ENCODE measurements at regions of chr11 and their contacts with region 1.

Region 1: GRCh38 chr11:66842896-66843775 is at the start of gene RCE1:
- DNase-seq: peak; percentile 82 to 95 (median 86)
- H3K4me3 ChIP-seq: peak within 1 kb of the TSS; percentile 72 to 100 (median 99)
- H3K27ac ChIP-seq: peak within 1 kb of the TSS; percentile 72 to 99 (median 94)
- H3K27me3 ChIP-seq: no peaks in the 10 kb centered on the region
- CTCF ChIP-seq: peak in 21 of 56 donors; percentile 7 to 54 (median 25)
- total RNA-seq, gene RCE1: 9.8 to 28.2 (median 16.6) TPM

Region 2: GRCh38 chr11:66344550-66345315 is 498.4 kb before region 1 on chr11 and contains the start of gene BRMS1:
- intact Hi-C with region 1: loop called in 1 of 2 experiments (anchors 10 kb)
- DNase-seq: peak; percentile 97 to 100 (median 99)
- H3K4me3 ChIP-seq: peak within 1 kb of the TSS; percentile 59 to 100 (median 94)
- H3K27ac ChIP-seq: peak within 1 kb of the TSS in 58 of 59 donors; percentile 8 to 98 (median 80)
- H3K27me3 ChIP-seq: no peaks in the 10 kb centered on the region
- CTCF ChIP-seq: peak in 53 of 56 donors; percentile 13 to 70 (median 49)
- total RNA-seq, gene BRMS1: 10.3 to 25.1 (median 16.2) TPM

Region 3: DNA sequence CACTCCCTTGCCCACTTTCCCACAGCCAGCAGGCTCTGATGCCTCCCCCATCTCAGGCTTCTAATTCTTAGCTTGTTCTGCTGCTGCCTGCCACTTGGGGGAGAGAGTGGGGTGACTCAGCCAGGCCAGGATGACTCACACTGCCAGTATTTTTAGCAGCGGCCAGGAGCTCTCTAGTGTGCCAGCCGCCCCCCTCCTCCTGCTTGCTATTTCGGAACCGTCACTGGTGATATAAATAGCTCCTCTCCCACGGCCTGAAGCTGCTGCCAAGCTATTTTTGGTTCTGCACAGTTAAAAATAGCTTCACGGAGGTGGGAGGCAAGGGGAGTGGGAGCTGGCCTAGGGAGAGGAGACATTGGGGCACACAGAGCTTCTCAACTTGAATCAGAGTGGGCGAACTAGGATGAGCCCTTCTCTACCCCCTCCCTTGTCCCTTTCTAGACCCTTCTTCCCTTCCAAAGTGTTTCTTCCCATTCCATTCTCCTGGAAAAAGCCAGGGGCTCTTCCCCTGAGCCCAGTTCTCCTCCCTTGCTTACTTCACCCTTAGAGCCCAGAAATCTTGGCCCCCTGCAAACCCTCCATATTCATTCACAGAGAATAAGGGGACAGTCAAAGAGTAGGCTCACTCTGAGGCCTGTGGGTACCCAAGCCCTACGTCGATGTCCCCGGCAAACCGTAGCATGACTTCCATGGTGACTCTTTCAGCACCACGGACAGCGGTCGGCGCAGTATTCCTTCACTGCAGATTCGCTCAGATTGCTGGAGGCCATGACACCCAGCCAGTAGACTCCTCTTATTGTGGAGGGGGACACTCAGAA is 424.8 kb before region 1 on chr11:
- intact Hi-C with region 1: loop called in 1 of 2 experiments (anchors 10 kb)
- DNase-seq: peak; percentile 40 to 92 (median 86)
- H3K4me3 ChIP-seq: peak overlapping the region in 1 of 59 donors; percentile 23
- H3K27ac ChIP-seq: peak overlapping the region in 50 of 59 donors; percentile 8 to 92 (median 73)
- H3K27me3 ChIP-seq: peaks cover 0 to 10% (median 0%) of the 10 kb centered on the region in 45 donors
- CTCF ChIP-seq: peak in 27 of 56 donors; percentile 10 to 56 (median 30)

Region 4: GRCh38 chr11:66784575-66784974 is 58.6 kb before region 1 on chr11:
- intact Hi-C with region 1: no loop called
- DNase-seq: no peak
- H3K4me3 ChIP-seq: no peak overlapping the region
- H3K27ac ChIP-seq: peak overlapping the region in 1 of 59 donors; percentile 14
- H3K27me3 ChIP-seq: no peaks in the 10 kb centered on the region
- CTCF ChIP-seq: no peak

Region 5: GRCh38 chr11:66823700-66824099 is 19.4 kb before region 1 on chr11:
- intact Hi-C with region 1: no loop called
- DNase-seq: no peak
- H3K4me3 ChIP-seq: no peak overlapping the region
- H3K27ac ChIP-seq: no peak overlapping the region
- H3K27me3 ChIP-seq: no peaks in the 10 kb centered on the region
- CTCF ChIP-seq: no peak

Region 6: DNA sequence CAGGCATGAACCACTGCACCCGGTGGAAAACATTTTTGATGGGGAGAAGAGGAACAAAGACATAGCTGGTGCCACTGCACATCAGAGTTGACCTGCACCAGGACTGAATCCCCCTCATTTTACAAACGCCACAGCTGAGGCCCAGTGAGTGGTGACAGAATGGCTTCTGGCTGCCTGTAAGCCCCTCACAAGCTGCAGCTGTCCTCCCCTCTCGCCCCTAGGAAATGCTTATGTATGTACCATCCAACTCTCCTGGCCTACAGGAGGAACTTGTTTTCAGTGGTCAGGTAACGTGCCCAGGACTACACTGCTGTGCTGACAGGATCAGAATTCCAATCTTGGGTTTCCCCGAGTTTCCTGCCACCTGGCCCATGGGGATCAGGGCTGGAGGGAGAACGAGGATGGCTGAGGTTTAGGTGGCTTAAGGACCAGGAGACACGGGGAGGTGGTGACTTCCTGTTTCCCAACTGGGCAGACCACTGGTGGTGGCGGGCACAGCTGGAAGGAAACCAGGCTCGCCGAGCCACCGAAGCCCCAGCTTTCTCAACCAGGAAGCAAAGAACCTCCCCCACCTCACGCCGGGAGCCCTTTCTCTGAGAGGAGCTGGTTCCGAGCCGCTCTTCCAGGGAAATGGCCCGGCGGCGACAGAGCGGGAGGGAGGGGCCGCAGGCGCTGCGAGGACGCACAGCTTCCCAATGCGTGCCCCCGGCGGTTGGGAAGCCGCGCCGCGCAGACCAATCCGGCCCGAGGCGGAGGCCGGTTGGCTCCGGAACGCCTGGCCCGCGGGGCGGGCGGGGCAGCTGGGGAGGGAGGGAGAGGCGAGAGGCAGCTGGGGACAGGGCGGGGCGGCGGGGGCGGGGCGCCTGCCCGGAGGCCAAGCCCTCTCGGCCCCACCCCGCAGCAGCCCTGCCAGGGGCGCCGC is 12.7 kb after region 1 on chr11:
- intact Hi-C with region 1: loop called in 1 of 2 experiments (anchors 1 kb)
- DNase-seq: peak; percentile 84 to 97 (median 93)
- H3K4me3 ChIP-seq: peak overlapping the region; percentile 55 to 90 (median 70)
- H3K27ac ChIP-seq: peak overlapping the region; percentile 68 to 98 (median 94)
- H3K27me3 ChIP-seq: no peaks in the 10 kb centered on the region
- CTCF ChIP-seq: peak in 21 of 56 donors; percentile 5 to 41 (median 22)

Measured in dorsolateral prefrontal cortex (tissue), 120 donors.